ENCODE measurements at regions of chr16 and their contacts with region 1.

Region 1: GRCh38 chr16:27109666-27110523 is 43.2 kb downstream of the C16orf82 start:
- DNase-seq: no peak
- ATAC-seq: peak; percentile 84
- H3K4me3 ChIP-seq: peak overlapping the region; percentile 31 to 47
- H3K27ac ChIP-seq: no peak overlapping the region
- H3K4me1 ChIP-seq: peaks cover 6% of the 10 kb centered on the region; the same call in 1 of the 2 replicates
- H3K27me3 ChIP-seq: peaks cover 2% of the 10 kb centered on the region; the same call in 1 of the 2 replicates
- CTCF ChIP-seq: peak; percentile 97

Region 2: DNA sequence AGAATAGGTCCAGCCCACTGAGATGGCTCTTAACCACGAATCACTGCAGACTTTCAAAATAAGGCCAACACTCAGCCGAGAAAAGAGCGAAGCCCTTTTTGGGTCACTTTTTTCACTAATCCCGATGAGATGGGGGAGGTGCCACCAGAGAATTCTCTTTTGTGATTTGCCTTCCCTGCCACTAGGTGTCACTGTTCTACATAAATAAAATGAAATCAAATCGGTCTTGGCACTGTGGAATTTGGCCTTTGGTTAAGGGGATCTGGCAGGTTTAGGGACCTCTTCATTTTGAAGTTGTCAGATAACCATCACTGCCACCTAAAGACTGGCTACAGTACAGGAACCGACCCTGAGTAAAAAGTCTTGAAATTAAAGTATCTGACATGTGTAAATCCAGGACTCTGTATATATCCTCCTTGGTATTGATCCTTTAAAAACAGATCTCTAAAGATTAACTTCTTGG is 1271.1 kb before region 1 on chr16:
- CTCF ChIA-PET with region 1: interaction called, 13 read pairs
- POLR2A ChIA-PET with region 1: no interaction called
- in situ Hi-C with region 1: no loop called
- intact Hi-C with region 1: loop called (anchors 1 kb)
- DNase-seq: peak; percentile 33
- ATAC-seq: peak; percentile 73
- H3K4me3 ChIP-seq: peak overlapping the region in 1 of 2 experiments; percentile 4; a peak in 1 of 4 replicates
- H3K27ac ChIP-seq: no peak overlapping the region
- H3K4me1 ChIP-seq: no peaks in the 10 kb centered on the region
- H3K27me3 ChIP-seq: peaks cover 9% of the 10 kb centered on the region
- CTCF ChIP-seq: peak; percentile 78

Region 3: GRCh38 chr16:26569793-26570192 is 540.1 kb before region 1 on chr16:
- CTCF ChIA-PET with region 1: interaction called, 11 read pairs
- POLR2A ChIA-PET with region 1: no interaction called
- in situ Hi-C with region 1: no loop called
- intact Hi-C with region 1: no loop called
- DNase-seq: peak; percentile 7
- ATAC-seq: peak; percentile 82
- H3K4me3 ChIP-seq: no peak overlapping the region
- H3K27ac ChIP-seq: no peak overlapping the region
- H3K4me1 ChIP-seq: no peaks in the 10 kb centered on the region
- H3K27me3 ChIP-seq: no peaks in the 10 kb centered on the region
- CTCF ChIP-seq: peak; percentile 62

Region 4: GRCh38 chr16:26840691-26841090 is 269.2 kb before region 1 on chr16:
- CTCF ChIA-PET with region 1: interaction called, 23 read pairs
- POLR2A ChIA-PET with region 1: no interaction called
- in situ Hi-C with region 1: no loop called
- intact Hi-C with region 1: no loop called
- DNase-seq: no peak
- ATAC-seq: no peak
- H3K4me3 ChIP-seq: no peak overlapping the region
- H3K27ac ChIP-seq: no peak overlapping the region
- H3K4me1 ChIP-seq: no peaks in the 10 kb centered on the region
- H3K27me3 ChIP-seq: no peaks in the 10 kb centered on the region
- CTCF ChIP-seq: no peak

Region 5: GRCh38 chr16:27154705-27155521 is 45.0 kb after region 1 on chr16:
- CTCF ChIA-PET with region 1: interaction called, 14 read pairs
- POLR2A ChIA-PET with region 1: no interaction called
- in situ Hi-C with region 1: no loop called
- intact Hi-C with region 1: no loop called
- DNase-seq: no peak
- ATAC-seq: peak; percentile 90
- H3K4me3 ChIP-seq: peak overlapping the region in 1 of 2 experiments; percentile 30; a peak in 2 of 4 replicates
- H3K27ac ChIP-seq: no peak overlapping the region
- H3K4me1 ChIP-seq: no peaks in the 10 kb centered on the region
- H3K27me3 ChIP-seq: no peaks in the 10 kb centered on the region
- CTCF ChIP-seq: peak; percentile 98

Measured in Panc1 (cell line).